Heart left ventricle (tissue), 16 donors: ENCODE measurements at regions of chr11 and their contacts with region 1.

Region 1: GRCh38 chr11:66616379-66617154 is at the start of gene RBM14:
- DNase-seq: peak; percentile 99 to 100 (median 99)
- ATAC-seq: peak; percentile 95 to 98 (median 98)
- H3K4me3 ChIP-seq: peak within 1 kb of the TSS; percentile 75 to 98 (median 86)
- H3K27ac ChIP-seq: peak within 1 kb of the TSS; percentile 62 to 98 (median 93)
- H3K4me1 ChIP-seq: peaks cover 2 to 49% (median 37%) of the 10 kb centered on the region in 12 donors
- H3K27me3 ChIP-seq: no peaks in the 10 kb centered on the region
- CTCF ChIP-seq: no peak
- POLR2A ChIP-seq: peak; percentile 45 to 97
- total RNA-seq, gene RBM14: 20.3 to 40.0 (median 30.6) TPM

Region 2: DNA sequence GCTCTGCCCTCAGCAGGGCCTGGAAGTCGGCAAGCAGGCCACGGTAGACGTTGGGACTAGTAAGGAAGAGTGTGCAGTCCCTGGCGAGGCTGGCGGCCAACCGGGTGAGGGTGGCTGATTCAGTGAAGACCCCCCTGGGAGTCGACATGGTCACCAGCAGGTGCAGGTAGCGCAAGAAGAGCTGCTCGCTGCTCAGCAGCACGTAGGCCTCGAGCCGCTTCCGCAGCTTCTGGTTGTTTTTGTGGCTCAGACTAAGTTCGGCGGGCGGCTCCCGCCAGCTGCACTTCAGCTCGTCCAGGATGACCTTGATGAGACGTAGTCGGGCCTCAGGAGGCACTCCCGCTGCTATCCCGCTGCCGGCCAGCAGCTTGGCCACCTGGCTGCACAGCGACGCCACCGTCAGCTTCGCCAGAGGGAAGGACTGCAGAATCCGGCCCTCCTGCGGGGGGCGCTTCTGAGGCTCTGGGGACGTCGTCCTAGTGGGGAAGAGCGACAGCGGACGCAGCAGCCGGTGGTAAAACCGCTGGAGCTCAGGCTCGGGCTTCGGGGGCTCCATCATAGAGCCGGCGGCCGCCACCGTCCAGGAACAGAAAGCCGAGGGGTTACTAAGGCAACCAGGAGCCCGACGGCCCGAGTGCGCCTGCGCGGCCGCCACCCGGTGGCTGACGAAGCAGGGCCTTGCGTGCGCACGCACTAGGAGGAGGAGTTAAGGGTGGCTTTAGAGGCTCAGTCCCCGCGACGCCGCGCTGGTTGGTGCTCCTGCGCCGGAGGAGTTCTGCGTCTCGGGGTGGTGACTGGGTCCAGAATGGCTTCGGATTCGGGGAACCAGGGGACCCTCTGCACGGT is 23.9 kb before region 1 on chr11 and contains the starts of genes CCDC87 and CCS:
- intact Hi-C with region 1: loop called in 1 of 10 experiments (anchors 2 kb)
- DNase-seq: peak; percentile 97 to 100 (median 98)
- ATAC-seq: peak; percentile 97 to 99 (median 98)
- H3K4me3 ChIP-seq: peak within 1 kb of the TSS; percentile 42 to 80 (median 68)
- H3K27ac ChIP-seq: peak within 1 kb of the TSS; percentile 24 to 91 (median 80)
- H3K4me1 ChIP-seq: peaks cover 2 to 38% (median 28%) of the 10 kb centered on the region in 12 donors
- H3K27me3 ChIP-seq: no peaks in the 10 kb centered on the region
- CTCF ChIP-seq: peak; percentile 48 to 86 (median 64)
- POLR2A ChIP-seq: peak; percentile 28 to 97
- total RNA-seq, gene CCDC87: 0.14 to 0.63 (median 0.36) TPM
- total RNA-seq, gene CCS: 13.9 to 26.7 (median 19.1) TPM

Region 3: GRCh38 chr11:66638177-66639065 is 21.9 kb after region 1 on chr11 and contains the start of gene RBM4:
- intact Hi-C with region 1: loop called in 3 of 10 experiments (anchors 1 to 2 kb)
- DNase-seq: peak; percentile 96 to 99 (median 98)
- ATAC-seq: peak; percentile 97 to 99 (median 98)
- H3K4me3 ChIP-seq: peak within 1 kb of the TSS; percentile 56 to 94 (median 75)
- H3K27ac ChIP-seq: peak within 1 kb of the TSS; percentile 43 to 93 (median 88)
- H3K4me1 ChIP-seq: peaks cover 17 to 64% (median 49%) of the 10 kb centered on the region in 12 donors
- H3K27me3 ChIP-seq: no peaks in the 10 kb centered on the region
- CTCF ChIP-seq: peak in 3 of 12 donors; percentile 9 to 30 (median 28)
- POLR2A ChIP-seq: peak; percentile 59 to 83
- total RNA-seq, gene RBM4: 46.4 to 89.4 (median 56.6) TPM

Region 4: GRCh38 chr11:66958232-66958955 is 341.8 kb after region 1 on chr11 and contains the start of gene PC:
- intact Hi-C with region 1: loop called in 1 of 10 experiments (anchors 5 kb)
- DNase-seq: peak; percentile 99 to 100 (median 99)
- ATAC-seq: peak; percentile 98 to 100 (median 100)
- H3K4me3 ChIP-seq: peak within 1 kb of the TSS; percentile 45 to 86 (median 72)
- H3K27ac ChIP-seq: peak within 1 kb of the TSS in 11 of 12 donors; percentile 57 to 92 (median 78)
- H3K4me1 ChIP-seq: peaks cover 0 to 18% (median 12%) of the 10 kb centered on the region in 12 donors
- H3K27me3 ChIP-seq: no peaks in the 10 kb centered on the region
- CTCF ChIP-seq: no peak
- POLR2A ChIP-seq: peak in 1 of 2 donors; percentile 88
- total RNA-seq, gene PC: 2.6 to 22.4 (median 13.1) TPM